CD14-positive monocyte (primary cell): ENCODE measurements at regions of chr2 and their contacts with region 1.

Region 1: DNA sequence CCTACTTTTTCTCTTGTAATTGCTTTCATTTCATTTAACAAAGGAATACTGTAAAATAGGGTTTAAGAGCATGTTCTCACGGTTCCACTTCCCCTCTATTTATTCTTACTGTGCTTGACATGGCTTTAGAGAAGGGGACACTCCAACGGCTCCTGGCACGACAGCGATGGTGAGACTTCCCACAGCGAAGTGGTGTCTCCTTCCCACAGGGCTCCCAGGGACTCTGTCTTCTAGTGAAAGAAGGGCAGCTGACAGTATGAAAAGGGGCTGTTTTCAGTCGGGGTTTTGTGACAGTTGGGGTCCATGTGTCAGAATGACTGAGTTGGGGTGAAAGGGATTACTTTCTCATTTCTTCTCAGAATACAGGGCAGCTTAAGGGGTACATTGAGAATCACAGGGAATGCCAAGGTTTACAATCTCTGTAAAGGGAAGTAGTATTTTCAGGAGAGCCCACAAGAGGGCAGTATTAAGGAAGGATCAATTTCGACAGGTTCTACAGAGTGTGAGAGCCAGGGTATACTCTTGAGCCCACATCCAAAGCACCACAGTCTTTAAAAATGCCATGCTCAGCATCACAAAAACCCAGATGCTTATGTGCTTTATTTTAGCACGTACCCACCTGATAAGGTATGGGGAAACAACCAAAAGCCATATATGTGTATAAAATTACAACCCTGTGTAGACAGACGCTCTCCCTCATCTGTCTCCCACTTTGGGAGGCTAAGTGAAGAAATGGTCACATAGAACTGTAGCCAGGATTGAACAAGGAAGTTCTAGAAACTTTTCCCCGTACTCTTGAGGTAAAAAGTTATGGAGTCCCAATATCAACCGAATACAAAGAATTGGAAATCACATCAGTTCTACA is 31.3 kb upstream of the RAPGEF4 start:
- DNase-seq: peak in 1 of 3 donors; percentile 15
- H3K4me3 ChIP-seq: no peak overlapping the region
- H3K4me3 Mint-ChIP-seq: no peak overlapping the region
- H3K27ac ChIP-seq: no peak overlapping the region
- H3K27ac Mint-ChIP-seq: no peak overlapping the region
- H3K4me1 ChIP-seq: no peaks in the 10 kb centered on the region
- H3K4me1 Mint-ChIP-seq: peaks cover 3% of the 10 kb centered on the region
- H3K27me3 ChIP-seq: peaks cover 0 to 3% of the 10 kb centered on the region in 2 donors
- H3K27me3 Mint-ChIP-seq: peaks cover 15 to 35% (median 22%) of the 10 kb centered on the region in 3 donors
- CTCF ChIP-seq: peak; percentile 69

Region 2: GRCh38 chr2:172172513-172173173 is 531.7 kb before region 1 on chr2:
- intact Hi-C with region 1: loop called in 1 of 2 experiments (anchors 10 kb)
- DNase-seq: peak; percentile 44 to 64 (median 54)
- H3K4me3 ChIP-seq: peak overlapping the region; percentile 73 to 88 (median 79)
- H3K4me3 Mint-ChIP-seq: peak overlapping the region; percentile 76 to 78
- H3K27ac ChIP-seq: no peak overlapping the region
- H3K27ac Mint-ChIP-seq: peak overlapping the region in 1 of 7 donors; percentile 66
- H3K4me1 ChIP-seq: peaks cover 5 to 6% of the 10 kb centered on the region in 2 donors
- H3K4me1 Mint-ChIP-seq: peaks cover 24% of the 10 kb centered on the region
- H3K27me3 ChIP-seq: peaks cover 0 to 8% of the 10 kb centered on the region in 2 donors
- H3K27me3 Mint-ChIP-seq: peaks cover 0 to 7% (median 3%) of the 10 kb centered on the region in 3 donors
- CTCF ChIP-seq: peak; percentile 92

Region 3: GRCh38 chr2:172596776-172597175 is 107.5 kb before region 1 on chr2:
- intact Hi-C with region 1: loop called in 1 of 2 experiments (anchors 10 kb)
- DNase-seq: no peak
- H3K4me3 ChIP-seq: no peak overlapping the region
- H3K4me3 Mint-ChIP-seq: no peak overlapping the region
- H3K27ac ChIP-seq: no peak overlapping the region
- H3K27ac Mint-ChIP-seq: no peak overlapping the region
- H3K4me1 ChIP-seq: no peaks in the 10 kb centered on the region
- H3K4me1 Mint-ChIP-seq: no peaks in the 10 kb centered on the region
- H3K27me3 ChIP-seq: no peaks in the 10 kb centered on the region
- H3K27me3 Mint-ChIP-seq: peaks cover 0 to 2% (median 2%) of the 10 kb centered on the region in 3 donors
- CTCF ChIP-seq: no peak

Region 4: GRCh38 chr2:172674034-172674967 is 30.0 kb before region 1 on chr2:
- intact Hi-C with region 1: no loop called
- DNase-seq: peak in 2 of 3 donors; percentile 13 to 19
- H3K4me3 ChIP-seq: peak overlapping the region; percentile 13 to 45 (median 22)
- H3K4me3 Mint-ChIP-seq: peak overlapping the region; percentile 75 to 80
- H3K27ac ChIP-seq: no peak overlapping the region
- H3K27ac Mint-ChIP-seq: no peak overlapping the region
- H3K4me1 ChIP-seq: no peaks in the 10 kb centered on the region
- H3K4me1 Mint-ChIP-seq: peaks cover 6% of the 10 kb centered on the region
- H3K27me3 ChIP-seq: no peaks in the 10 kb centered on the region
- H3K27me3 Mint-ChIP-seq: peaks cover 1 to 12% (median 12%) of the 10 kb centered on the region in 3 donors
- CTCF ChIP-seq: peak; percentile 63